Right ventricle myocardium inferior (tissue), 1 donor: ENCODE measurements at regions of chr20 and their contacts with region 1.

Region 1: DNA sequence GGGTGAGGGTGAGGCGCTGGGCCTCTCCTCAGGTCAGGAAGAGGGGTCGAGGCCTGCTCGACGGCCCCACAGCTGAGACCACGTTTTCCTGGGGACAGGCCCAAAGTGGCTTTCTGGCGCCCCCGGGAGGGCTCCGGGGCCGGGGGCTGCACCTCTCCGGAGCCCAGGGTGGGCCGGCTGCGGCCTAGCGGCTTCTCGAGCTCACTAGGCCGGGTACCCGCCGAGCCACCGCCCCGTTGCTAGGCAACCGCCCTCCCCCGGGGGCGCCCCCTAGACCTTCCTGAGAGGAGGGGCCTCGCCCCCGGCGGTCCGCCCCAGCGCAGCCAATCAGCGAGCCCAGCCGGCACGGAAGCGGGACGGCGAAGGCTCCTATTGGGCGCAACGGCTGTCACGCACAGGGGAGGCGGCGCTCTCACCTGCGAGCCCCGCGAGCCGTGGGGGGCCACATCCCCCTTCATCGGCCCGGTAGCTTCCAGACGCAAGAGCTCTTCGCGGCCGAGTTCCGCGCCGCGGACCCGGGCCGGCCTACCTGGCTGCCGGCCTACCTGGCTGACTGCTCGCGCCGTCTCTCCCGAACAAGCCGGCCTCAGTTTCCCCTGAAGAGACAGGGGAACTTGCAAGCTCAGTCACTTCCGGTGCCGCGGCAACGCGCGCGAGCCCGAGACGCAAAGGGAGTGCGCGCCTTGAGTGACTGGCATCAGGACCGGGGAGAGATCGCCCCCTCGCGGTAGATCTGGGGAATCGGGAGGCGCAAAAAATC is 831 bp upstream of the BCL2L1 start:
- DNase-seq: peak; percentile 99
- ATAC-seq: peak; percentile 96

Region 2: DNA sequence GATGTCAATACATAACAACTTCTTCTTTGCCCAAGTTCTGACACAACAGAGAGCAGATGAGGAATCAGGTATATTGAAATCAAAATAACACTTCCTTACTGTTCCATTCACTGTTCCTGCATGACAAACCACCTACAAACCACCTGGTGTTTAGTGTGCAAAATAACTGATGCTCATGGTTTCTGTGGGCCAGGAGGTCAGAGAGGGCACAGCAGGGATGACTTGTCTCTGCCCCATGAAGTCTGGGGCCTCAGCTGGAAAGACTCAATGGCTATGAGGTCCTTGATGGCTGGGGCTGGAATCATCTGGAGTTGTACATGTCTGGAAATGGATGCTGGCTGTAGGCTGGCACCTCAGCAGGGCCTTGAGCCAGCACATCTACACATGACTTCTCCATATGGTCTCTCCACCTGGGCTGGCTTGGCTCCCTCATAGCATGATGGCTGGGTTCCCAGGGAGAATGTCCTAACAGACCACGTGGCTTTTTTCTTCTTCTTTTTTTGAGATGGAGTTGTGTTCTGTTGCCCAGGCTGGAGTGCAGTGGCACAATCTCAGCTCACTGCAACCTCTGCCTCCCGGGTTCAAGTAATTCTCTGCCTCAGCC is 93.2 kb before region 1 on chr20:
- intact Hi-C with region 1: loop called (anchors 1 kb)
- DNase-seq: no peak
- ATAC-seq: no peak

Region 3: DNA sequence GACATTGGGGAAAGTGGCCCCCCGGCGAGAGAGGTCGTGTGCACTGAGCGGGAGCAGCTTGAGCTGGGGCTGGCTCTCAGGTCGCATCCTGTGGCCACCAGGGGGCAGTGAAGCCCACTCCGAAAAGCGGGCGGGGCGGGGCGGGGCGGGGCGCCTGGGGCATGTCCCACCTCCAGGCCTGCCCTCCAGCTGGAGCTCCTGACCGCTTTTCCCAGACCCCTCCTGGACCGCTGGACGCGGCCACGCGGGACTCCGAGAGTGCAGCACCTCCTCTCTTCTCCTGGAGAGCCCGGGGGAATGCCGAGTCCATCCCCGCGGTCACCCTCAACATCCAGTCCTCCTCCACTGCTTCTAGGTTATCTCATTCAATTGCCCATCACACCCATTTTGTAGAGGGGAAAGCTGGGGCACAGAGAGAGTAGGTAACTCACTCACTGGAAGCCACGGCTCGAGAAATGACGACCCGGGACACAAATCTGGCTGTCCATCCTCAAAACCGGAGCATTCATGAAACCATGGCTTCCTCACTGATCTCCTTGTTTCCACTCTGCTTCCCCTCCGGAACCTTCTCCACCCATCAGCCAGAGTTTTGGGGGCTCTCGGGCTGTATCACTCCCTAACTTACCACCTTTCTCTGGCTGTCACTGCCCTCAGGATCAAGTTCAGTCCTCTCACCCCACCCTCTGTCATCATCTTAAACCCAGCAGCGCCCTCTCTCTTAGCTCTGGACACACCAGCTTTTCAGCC is 61.7 kb before region 1 on chr20:
- intact Hi-C with region 1: loop called (anchors 1 kb)
- DNase-seq: peak; percentile 91
- ATAC-seq: peak; percentile 85